ENCODE measurements at regions of chr18 and their contacts with region 1.

Region 1: GRCh38 chr18:24488824-24489493 is 28.5 kb downstream of the HRH4 start:
- DNase-seq: peak; percentile 13
- ATAC-seq: no peak
- H3K4me3 ChIP-seq: no peak overlapping the region
- H3K27ac ChIP-seq: no peak overlapping the region
- H3K4me1 ChIP-seq: no peaks in the 10 kb centered on the region
- H3K27me3 ChIP-seq: peaks cover 2 to 16% of the 10 kb centered on the region in 2 experiments; a peak in 2 of 5 replicates
- CTCF ChIP-seq: peak; percentile 56
- EP300 ChIP-seq: no peak
- POLR2A ChIP-seq: no peak
- RAD21 ChIP-seq: no peak

Region 2: DNA sequence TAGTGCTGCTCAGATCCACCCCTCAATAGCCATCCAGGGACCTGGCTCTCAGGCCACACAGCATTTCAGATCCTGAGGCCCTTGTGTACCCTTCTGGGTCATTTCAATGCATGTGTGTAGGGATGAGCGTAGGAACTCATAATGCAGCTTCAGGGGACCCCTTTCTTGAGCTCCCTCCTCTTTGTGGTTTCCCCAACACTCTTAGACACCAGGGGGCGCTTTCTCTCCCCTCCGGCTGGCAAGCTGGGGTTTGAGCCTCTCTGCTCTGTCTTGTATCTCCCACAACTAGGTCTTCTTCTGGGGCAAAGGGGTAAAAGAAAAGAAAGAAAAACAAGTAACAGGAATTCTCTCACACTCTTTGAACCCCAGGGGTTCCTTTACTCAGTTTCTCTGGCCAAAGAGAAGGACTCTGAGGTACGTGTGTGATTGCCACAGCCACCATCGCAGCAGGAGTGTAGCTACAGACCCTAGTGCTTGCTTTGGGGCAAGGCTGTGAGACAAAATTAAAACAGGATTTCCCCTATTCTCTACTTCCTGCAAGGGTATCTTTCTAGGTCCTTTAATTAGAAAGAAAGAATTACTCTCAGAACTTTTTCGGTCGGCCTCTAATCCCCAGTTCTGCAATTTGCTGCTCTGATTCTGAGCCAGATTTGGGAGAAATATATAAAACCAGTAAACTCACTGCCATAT is 312.1 kb before region 1 on chr18:
- CTCF ChIA-PET with region 1: interaction called, 10 read pairs
- POLR2A ChIA-PET with region 1: no interaction called
- in situ Hi-C with region 1: loop called (anchors 5 kb)
- intact Hi-C with region 1: loop called (anchors 2 kb)
- DNase-seq: peak; percentile 37
- ATAC-seq: peak; percentile 78
- H3K4me3 ChIP-seq: no peak overlapping the region
- H3K27ac ChIP-seq: no peak overlapping the region
- H3K4me1 ChIP-seq: no peaks in the 10 kb centered on the region
- H3K27me3 ChIP-seq: peaks cover 1 to 4% of the 10 kb centered on the region in 2 experiments; a peak in 2 of 5 replicates
- CTCF ChIP-seq: peak; percentile 70
- EP300 ChIP-seq: no peak
- POLR2A ChIP-seq: no peak
- RAD21 ChIP-seq: peak; percentile 30; the same call in 1 of the 2 replicates

Region 3: DNA sequence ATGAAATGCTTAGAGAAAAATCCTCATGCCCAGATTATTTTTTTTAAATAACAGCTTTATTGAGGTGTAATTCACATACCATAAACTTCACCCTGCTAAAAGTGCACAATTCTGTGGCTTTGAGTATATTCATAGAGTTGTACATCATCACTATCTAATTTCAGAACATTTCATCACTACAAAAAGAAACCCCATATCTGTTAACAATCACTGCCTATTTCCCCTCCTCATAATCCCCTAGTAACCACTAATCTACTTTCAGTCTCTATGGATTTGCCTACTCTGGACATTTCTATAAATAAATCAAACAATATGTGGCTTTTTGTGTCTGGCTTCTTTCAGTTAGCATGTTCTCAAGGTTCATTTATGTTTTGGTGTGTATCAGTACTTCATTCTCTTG is 142.7 kb before region 1 on chr18:
- CTCF ChIA-PET with region 1: no interaction called
- POLR2A ChIA-PET with region 1: no interaction called
- in situ Hi-C with region 1: no loop called
- intact Hi-C with region 1: no loop called
- DNase-seq: no peak
- ATAC-seq: no peak
- H3K4me3 ChIP-seq: no peak overlapping the region
- H3K27ac ChIP-seq: no peak overlapping the region
- H3K4me1 ChIP-seq: no peaks in the 10 kb centered on the region
- H3K27me3 ChIP-seq: no peaks in the 10 kb centered on the region; a peak in 1 of 5 replicates
- CTCF ChIP-seq: no peak
- EP300 ChIP-seq: no peak
- POLR2A ChIP-seq: no peak
- RAD21 ChIP-seq: no peak

Region 4: GRCh38 chr18:24362758-24363157 is 126.2 kb before region 1 on chr18:
- CTCF ChIA-PET with region 1: interaction called, 17 read pairs
- POLR2A ChIA-PET with region 1: no interaction called
- in situ Hi-C with region 1: loop called (anchors 10 kb)
- intact Hi-C with region 1: loop called (anchors 1 kb)
- DNase-seq: no peak
- ATAC-seq: no peak
- H3K4me3 ChIP-seq: no peak overlapping the region
- H3K27ac ChIP-seq: no peak overlapping the region
- H3K4me1 ChIP-seq: no peaks in the 10 kb centered on the region
- H3K27me3 ChIP-seq: no peaks in the 10 kb centered on the region
- CTCF ChIP-seq: no peak
- EP300 ChIP-seq: no peak
- POLR2A ChIP-seq: no peak
- RAD21 ChIP-seq: no peak

Region 5: DNA sequence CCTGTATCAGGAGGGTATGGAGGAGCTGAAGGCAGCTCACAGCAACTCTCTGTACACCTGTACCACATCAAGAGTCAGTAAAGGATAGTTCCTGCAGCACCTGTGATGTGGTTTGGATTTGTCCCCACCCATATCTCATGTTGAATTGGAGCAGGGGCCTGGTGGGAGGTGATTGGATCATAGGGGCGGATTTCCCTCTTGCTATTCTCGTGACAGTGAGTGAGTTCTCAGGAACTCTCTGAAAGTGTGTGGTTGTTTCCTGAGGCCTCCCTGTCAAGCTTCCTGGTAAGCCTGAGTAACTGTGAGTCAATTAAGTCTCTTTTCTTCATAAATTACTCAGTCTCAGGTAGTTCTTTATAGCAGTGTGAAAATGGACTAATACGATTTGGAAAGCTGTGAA is 120.2 kb before region 1 on chr18:
- CTCF ChIA-PET with region 1: no interaction called
- POLR2A ChIA-PET with region 1: no interaction called
- in situ Hi-C with region 1: loop called (anchors 10 kb)
- intact Hi-C with region 1: no loop called
- DNase-seq: no peak
- ATAC-seq: no peak
- H3K4me3 ChIP-seq: no peak overlapping the region
- H3K27ac ChIP-seq: no peak overlapping the region
- H3K4me1 ChIP-seq: no peaks in the 10 kb centered on the region
- H3K27me3 ChIP-seq: 0 out of 5 replicates have a peak, but pooled peaks cover 0 to 4% of the 10 kb centered on the region in 2 experiments
- CTCF ChIP-seq: no peak
- EP300 ChIP-seq: no peak
- POLR2A ChIP-seq: no peak
- RAD21 ChIP-seq: no peak

Region 6: GRCh38 chr18:24600076-24600654 is 111.2 kb after region 1 on chr18:
- CTCF ChIA-PET with region 1: no interaction called
- POLR2A ChIA-PET with region 1: no interaction called
- in situ Hi-C with region 1: loop called (anchors 25 kb)
- intact Hi-C with region 1: no loop called
- DNase-seq: peak; percentile 40
- ATAC-seq: 0 out of 3 replicates have a peak, but pooled peaks have one; percentile 36
- H3K4me3 ChIP-seq: no peak overlapping the region
- H3K27ac ChIP-seq: no peak overlapping the region
- H3K4me1 ChIP-seq: no peaks in the 10 kb centered on the region
- H3K27me3 ChIP-seq: peaks cover 2 to 4% of the 10 kb centered on the region in 2 experiments; a peak in 2 of 5 replicates
- CTCF ChIP-seq: peak; percentile 50
- EP300 ChIP-seq: no peak
- POLR2A ChIP-seq: no peak
- RAD21 ChIP-seq: no peak

Region 7: DNA sequence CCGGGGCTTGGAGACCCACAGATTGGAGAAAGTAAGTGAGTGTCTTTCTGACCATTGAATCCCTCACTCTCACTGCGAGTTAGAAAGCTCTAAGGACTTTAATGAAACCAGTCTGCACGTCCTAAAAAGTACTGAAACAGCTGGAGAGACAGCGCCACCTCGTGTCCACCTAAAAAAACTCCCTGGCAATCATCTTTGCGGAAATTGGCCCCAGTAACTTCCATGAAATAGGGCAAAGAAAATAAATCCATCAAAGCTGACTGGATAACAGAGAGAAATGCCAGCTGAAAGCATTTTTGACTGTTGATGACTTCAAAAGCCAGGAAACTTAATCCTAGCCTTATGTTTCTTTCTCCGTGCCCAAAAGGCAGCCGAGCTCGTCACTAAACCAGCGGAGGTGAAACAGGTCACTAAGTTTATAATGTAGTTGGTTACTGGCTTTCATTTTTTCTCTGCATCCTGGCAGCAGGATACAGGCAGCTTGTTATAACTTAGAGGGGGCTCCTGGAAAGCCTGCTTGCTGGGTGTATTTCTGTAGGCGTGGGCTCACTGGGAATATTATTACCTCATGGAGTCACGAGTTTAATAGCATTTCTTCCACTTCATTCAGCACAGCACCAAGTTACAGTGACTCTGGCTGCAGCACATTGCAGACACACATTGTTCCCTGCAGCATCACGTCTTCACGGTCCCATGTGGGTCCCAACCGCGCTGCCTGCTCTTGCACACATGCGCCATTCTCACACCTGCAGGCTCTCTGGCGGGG is 238.0 kb after region 1 on chr18:
- CTCF ChIA-PET with region 1: interaction called, 18 read pairs
- POLR2A ChIA-PET with region 1: no interaction called
- in situ Hi-C with region 1: loop called (anchors 25 kb)
- intact Hi-C with region 1: loop called (anchors 1 kb)
- DNase-seq: peak; percentile 45
- ATAC-seq: peak; percentile 54
- H3K4me3 ChIP-seq: no peak overlapping the region
- H3K27ac ChIP-seq: no peak overlapping the region
- H3K4me1 ChIP-seq: no peaks in the 10 kb centered on the region
- H3K27me3 ChIP-seq: no peaks in the 10 kb centered on the region
- CTCF ChIP-seq: peak; percentile 76
- EP300 ChIP-seq: no peak
- POLR2A ChIP-seq: no peak
- RAD21 ChIP-seq: peak; percentile 57; the same call in 1 of the 2 replicates

Measured in HepG2 (cell line).